Activated T-helper 1 cell treated with anti-CD3 and anti-CD28 coated beads, Interleukin-12 subunit alpha, Interleukin-12 subunit beta, Interleukin-2, Interleukin-4 antibody, amounts not matched to agents 30 ng/mL and 10 ng/mL and 1 ng/mL, durations not matched to agents 14 hours and 24 hours and 36 hours (primary cell): ENCODE measurements at regions of chr14 and their contacts with region 1.

Region 1: DNA sequence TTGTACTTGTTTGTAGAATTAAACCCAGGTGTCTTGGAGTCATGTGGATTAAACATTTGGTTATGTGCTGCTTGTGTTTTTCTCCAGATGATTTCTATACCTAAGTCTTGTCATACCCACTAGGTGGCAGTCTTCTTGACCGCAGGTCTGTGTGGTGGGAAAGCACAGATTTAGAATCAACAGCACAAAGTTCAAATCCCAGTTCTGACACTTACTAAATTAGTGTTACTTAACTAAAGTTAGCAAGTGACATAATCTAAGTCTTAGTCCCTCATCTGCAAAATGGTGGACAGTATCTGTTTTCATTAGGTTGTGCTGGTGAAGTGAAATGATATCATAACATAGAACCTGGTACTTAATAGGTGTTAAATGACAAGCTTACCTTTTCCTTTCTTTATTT is 151.0 kb upstream of the ARHGAP5 start:
- DNase-seq: no peak
- H3K4me3 Mint-ChIP-seq: no peak overlapping the region
- H3K27ac Mint-ChIP-seq: no peak overlapping the region
- H3K4me1 Mint-ChIP-seq: peaks cover 10% of the 10 kb centered on the region
- H3K27me3 Mint-ChIP-seq: peaks cover 2% of the 10 kb centered on the region

Region 2: GRCh38 chr14:31937721-31938346 is 11.7 kb after region 1 on chr14:
- intact Hi-C with region 1: loop called (anchors 1 kb)
- DNase-seq: peak; percentile 64
- H3K4me3 Mint-ChIP-seq: no peak overlapping the region
- H3K27ac Mint-ChIP-seq: peak overlapping the region; percentile 7
- H3K4me1 Mint-ChIP-seq: peaks cover 10% of the 10 kb centered on the region
- H3K27me3 Mint-ChIP-seq: peaks cover 3% of the 10 kb centered on the region

Region 3: DNA sequence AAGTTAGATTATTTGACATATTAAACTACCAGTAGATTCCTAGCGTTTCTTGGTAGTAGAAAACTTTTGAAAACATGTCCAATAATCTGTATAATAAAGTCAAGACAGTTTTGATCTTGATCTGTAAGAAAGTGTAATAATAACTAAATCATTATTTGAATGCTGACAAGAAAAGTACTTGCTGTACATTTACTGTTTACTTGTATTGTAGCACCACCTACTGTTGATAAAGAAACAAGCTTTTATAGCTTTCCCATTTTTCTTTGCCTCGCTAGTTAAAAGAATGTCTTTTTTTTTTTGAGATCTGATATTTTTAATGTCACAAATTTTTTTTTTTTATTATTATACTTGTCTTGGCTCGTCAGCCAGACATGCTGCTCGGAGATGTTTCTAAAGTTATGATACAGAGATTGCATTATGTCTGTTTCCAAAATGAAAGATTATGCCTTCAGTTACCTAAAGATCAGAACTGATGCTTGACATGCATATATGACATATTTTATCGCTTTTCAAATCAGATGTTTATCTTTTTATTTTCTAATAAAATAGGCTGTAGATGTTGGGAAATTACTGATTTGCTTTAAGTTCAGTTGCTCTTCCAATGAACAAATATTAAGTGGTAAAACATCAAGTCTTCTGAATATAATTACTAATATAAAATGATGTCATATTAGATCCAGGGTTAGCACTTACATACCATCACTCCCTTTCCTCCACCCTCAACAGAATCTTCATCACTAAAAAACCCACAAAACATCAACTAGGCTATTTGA is 543.5 kb after region 1 on chr14:
- intact Hi-C with region 1: loop called (anchors 1 kb)
- DNase-seq: no peak
- H3K4me3 Mint-ChIP-seq: no peak overlapping the region
- H3K27ac Mint-ChIP-seq: no peak overlapping the region
- H3K4me1 Mint-ChIP-seq: no peaks in the 10 kb centered on the region
- H3K27me3 Mint-ChIP-seq: peaks cover 6% of the 10 kb centered on the region